ENCODE measurements at regions of chr21 and their contacts with region 1.

Region 1: GRCh38 chr21:15319727-15320126 is 254.9 kb upstream of the NRIP1 start:
- DNase-seq: no peak
- ATAC-seq: no peak
- H3K4me3 ChIP-seq: no peak overlapping the region
- H3K27ac ChIP-seq: no peak overlapping the region
- H3K4me1 ChIP-seq: no peaks in the 10 kb centered on the region
- H3K27me3 ChIP-seq: no peaks in the 10 kb centered on the region
- CTCF ChIP-seq: no peak
- POLR2A ChIP-seq: no peak

Region 2: DNA sequence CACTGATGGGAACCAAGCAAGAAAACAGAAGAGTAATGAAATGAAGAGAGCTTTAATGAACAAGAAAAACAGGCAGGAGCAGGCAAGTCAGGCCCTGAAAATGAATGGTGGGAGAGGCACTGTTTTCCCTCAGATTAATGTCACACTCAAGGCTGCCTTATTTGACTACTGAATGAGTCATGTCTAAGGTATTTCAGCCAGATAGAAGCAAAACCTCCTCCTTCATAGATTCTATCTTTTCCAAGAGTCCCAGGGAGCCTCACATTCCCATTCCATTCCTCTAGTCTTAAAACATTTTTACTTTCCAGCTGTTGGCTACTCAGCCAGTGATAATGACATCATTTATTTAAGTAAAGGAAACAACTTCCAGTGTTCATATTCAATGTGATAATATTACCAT is 26.5 kb before region 1 on chr21:
- in situ Hi-C with region 1: no loop called
- intact Hi-C with region 1: loop called (anchors 1 kb)
- DNase-seq: no peak
- ATAC-seq: no peak
- H3K4me3 ChIP-seq: no peak overlapping the region
- H3K27ac ChIP-seq: no peak overlapping the region
- H3K4me1 ChIP-seq: peaks cover 0 to 2% of the 10 kb centered on the region in 2 donors
- H3K27me3 ChIP-seq: no peaks in the 10 kb centered on the region
- CTCF ChIP-seq: no peak
- POLR2A ChIP-seq: no peak